HCT116 (cell line): ENCODE measurements at regions of chr17 and their contacts with region 1.

Region 1: DNA sequence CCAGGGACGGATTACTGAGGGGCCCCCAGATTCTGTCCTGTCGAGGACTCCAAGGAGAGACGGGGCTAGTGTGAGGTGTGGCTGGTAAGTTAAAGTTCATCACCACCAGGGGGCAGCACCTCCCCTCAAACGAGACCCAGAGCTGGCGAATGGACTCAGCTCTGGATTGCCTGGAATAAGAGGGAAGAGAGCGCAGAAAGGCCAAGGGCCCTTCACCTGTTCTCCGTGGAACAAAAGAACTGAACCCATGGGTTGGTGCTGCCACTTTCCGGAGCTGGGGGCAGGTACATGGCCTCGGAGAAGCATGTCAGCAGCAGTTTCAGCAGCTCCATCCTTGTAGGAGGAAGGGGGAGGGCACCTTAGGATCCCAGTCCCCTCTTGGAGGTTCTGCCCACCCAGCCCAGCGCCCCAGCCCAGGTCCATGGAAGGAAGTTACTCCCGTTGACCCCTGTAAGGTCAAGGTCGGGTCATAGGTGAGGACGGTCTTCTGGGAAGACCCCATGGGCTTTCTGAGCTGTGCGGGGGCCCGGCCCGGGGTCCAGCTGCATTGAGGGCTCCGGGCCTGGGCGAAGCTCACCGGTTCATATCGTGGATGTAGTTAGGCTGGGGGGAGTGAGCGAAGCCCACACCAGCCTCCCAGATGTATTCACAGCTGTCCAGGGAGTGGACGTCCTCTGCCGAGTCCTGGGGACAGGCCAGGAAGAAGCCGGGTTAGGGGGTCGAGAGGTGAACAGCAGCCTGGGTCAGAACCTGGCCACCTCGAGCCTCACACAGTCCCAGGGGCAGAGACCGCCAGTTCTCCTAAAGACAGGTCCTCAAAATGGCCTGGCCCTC is 10.7 kb downstream of the HID1 start:
- DNase-seq: peak; percentile 80
- ATAC-seq: peak; percentile 80
- H3K4me3 ChIP-seq: no peak overlapping the region
- H3K27ac ChIP-seq: no peak overlapping the region
- H3K4me1 ChIP-seq: peaks cover 11 to 20% of the 10 kb centered on the region in 2 experiments; a peak in 3 of 4 replicates
- H3K27me3 ChIP-seq: no peaks in the 10 kb centered on the region
- CTCF ChIP-seq: peak; percentile 75 to 95 (median 87)
- POLR2A ChIP-seq: no peak
- RAD21 ChIP-seq: peak; percentile 99

Region 2: GRCh38 chr17:74790161-74791054 is 171.5 kb before region 1 on chr17:
- CTCF ChIA-PET with region 1: interaction called, 12 read pairs
- POLR2A ChIA-PET with region 1: no interaction called
- RAD21 ChIA-PET with region 1: no interaction called
- intact Hi-C with region 1: loop called (anchors 1 kb)
- DNase-seq: no peak
- ATAC-seq: no peak
- H3K4me3 ChIP-seq: no peak overlapping the region
- H3K27ac ChIP-seq: no peak overlapping the region
- H3K4me1 ChIP-seq: no peaks in the 10 kb centered on the region; a peak in 1 of 4 replicates
- H3K27me3 ChIP-seq: no peaks in the 10 kb centered on the region
- CTCF ChIP-seq: no peak
- POLR2A ChIP-seq: no peak
- RAD21 ChIP-seq: no peak

Region 3: GRCh38 chr17:74950207-74950606 is 11.7 kb before region 1 on chr17:
- CTCF ChIA-PET with region 1: interaction called, 24 read pairs
- POLR2A ChIA-PET with region 1: interaction called, 4 read pairs
- RAD21 ChIA-PET with region 1: no interaction called
- intact Hi-C with region 1: no loop called
- DNase-seq: no peak
- ATAC-seq: peak; percentile 45
- H3K4me3 ChIP-seq: no peak overlapping the region
- H3K27ac ChIP-seq: no peak overlapping the region
- H3K4me1 ChIP-seq: peaks cover 2 to 19% of the 10 kb centered on the region in 2 experiments; a peak in 3 of 4 replicates
- H3K27me3 ChIP-seq: no peaks in the 10 kb centered on the region
- CTCF ChIP-seq: no peak
- POLR2A ChIP-seq: no peak
- RAD21 ChIP-seq: no peak

Region 4: DNA sequence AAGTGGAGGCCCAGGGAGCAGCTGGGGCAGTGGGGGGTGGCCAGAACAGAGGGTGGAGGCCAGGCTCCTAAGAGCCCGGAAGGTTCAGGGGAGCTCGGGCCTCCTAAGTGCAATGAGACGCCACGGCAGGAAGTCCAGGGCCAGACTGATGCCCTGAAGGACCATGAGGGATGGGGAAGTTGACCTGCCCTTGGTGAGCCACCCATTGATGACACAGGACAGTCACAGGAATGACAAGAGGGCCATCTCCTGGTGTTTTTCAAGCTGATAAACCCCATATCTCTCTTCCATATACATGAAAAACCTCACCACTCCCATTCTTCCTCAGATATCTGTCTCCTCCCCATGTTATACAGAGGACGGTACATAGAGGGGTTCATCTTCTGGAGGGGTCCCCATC is 44.8 kb after region 1 on chr17:
- CTCF ChIA-PET with region 1: interaction called, 35 read pairs
- POLR2A ChIA-PET with region 1: interaction called, 4 read pairs
- RAD21 ChIA-PET with region 1: interaction called, 3 read pairs
- intact Hi-C with region 1: loop called (anchors 1 kb)
- DNase-seq: no peak
- ATAC-seq: peak; percentile 52
- H3K4me3 ChIP-seq: no peak overlapping the region
- H3K27ac ChIP-seq: no peak overlapping the region
- H3K4me1 ChIP-seq: peaks cover under 1 to 5% of the 10 kb centered on the region in 2 experiments; a peak in 2 of 4 replicates
- H3K27me3 ChIP-seq: no peaks in the 10 kb centered on the region
- CTCF ChIP-seq: peak in 1 of 3 experiments; percentile 47; a peak in 1 of 6 replicates
- POLR2A ChIP-seq: no peak
- RAD21 ChIP-seq: peak; percentile 69

Region 5: GRCh38 chr17:75059369-75060345 is 97.8 kb after region 1 on chr17:
- CTCF ChIA-PET with region 1: interaction called, 16 read pairs
- POLR2A ChIA-PET with region 1: interaction called, 3 read pairs
- RAD21 ChIA-PET with region 1: interaction called, 3 read pairs
- intact Hi-C with region 1: no loop called
- DNase-seq: no peak
- ATAC-seq: peak; percentile 67; the same call in 1 of the 2 replicates
- H3K4me3 ChIP-seq: no peak overlapping the region
- H3K27ac ChIP-seq: no peak overlapping the region
- H3K4me1 ChIP-seq: peaks cover 0 to 4% of the 10 kb centered on the region in 2 experiments; a peak in 1 of 4 replicates
- H3K27me3 ChIP-seq: no peaks in the 10 kb centered on the region
- CTCF ChIP-seq: peak; percentile 39 to 54 (median 41); a peak in 5 of 6 replicates
- POLR2A ChIP-seq: no peak
- RAD21 ChIP-seq: peak; percentile 69

Region 6: DNA sequence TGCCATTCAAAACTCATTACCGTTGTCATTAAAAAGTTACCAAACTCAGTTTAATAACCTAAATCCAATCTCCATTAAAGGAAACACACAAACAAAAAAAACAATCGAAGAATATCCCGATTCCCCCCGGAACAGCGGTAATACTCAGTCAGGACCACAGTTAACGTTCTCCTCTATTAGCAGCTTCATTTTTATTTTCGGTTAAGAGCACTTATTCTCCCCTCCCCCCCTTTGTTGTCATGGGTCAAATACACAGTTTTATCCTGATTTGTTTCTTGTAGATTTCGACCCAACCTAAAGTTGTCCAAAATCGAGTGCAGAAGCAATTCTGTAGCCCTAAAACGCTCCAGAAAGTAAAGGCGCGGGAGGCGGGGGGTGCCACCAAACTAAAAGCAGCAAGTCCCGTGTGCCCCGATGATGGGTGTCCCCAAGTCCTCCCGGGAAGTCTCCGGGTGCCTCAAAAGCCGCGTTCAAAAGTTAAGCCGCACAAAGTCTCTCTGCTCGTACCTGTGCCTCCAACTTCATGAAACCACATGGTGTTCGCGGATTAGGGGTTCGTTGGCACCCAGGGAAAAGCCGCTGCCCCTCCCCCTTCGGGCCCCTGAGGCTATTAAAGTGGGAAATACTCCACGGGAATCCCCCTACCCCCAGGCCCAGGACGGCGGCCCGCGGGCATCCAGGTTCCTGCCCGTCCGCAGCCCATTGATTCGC is 219.9 kb after region 1 on chr17:
- CTCF ChIA-PET with region 1: no interaction called
- POLR2A ChIA-PET with region 1: no interaction called
- RAD21 ChIA-PET with region 1: no interaction called
- intact Hi-C with region 1: no loop called
- DNase-seq: no peak
- ATAC-seq: no peak
- H3K4me3 ChIP-seq: peak overlapping the region; percentile 76 to 89
- H3K27ac ChIP-seq: peak overlapping the region; percentile 100
- H3K4me1 ChIP-seq: peaks cover 20 to 33% of the 10 kb centered on the region in 2 experiments
- H3K27me3 ChIP-seq: no peaks in the 10 kb centered on the region
- CTCF ChIP-seq: no peak
- POLR2A ChIP-seq: no peak
- RAD21 ChIP-seq: no peak

Region 7: DNA sequence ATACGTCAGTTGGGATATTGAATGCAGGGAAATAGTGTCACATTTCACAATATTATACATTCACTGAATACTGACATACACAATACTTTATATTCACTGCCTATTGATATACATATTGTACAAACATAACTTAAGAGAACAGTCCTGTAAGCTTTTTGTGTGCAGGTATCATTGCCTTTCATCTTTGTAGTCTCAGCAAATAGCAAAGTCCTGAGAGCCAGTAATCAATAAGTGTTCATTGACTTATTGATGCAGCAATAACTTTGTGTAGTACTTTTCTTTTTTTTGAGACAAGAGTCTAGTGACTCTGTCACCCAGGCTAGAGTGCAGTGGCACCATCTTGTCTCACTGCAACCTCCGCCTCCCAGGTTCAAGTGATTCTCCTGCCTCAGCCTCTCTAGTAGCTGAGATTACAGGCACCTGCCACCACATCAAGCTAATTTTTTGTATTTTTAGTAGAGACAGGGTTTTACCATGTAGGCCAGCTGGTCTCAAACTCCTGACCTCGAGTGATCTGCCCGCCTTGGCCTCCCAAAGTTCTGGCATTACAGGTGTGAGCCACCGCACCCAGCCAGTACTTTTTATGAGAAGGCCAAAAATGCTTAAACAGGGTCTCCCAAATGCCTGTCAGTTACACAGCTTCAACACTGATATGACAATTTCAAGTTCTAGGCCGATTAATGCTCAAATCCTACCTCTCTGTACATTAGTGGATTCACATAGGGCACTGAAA is 238.2 kb after region 1 on chr17:
- CTCF ChIA-PET with region 1: interaction called, 18 read pairs
- POLR2A ChIA-PET with region 1: interaction called, 6 read pairs
- RAD21 ChIA-PET with region 1: interaction called, 4 to 7 read pairs
- intact Hi-C with region 1: loop called (anchors 1 kb)
- DNase-seq: no peak
- ATAC-seq: no peak
- H3K4me3 ChIP-seq: no peak overlapping the region
- H3K27ac ChIP-seq: peak overlapping the region; percentile 62
- H3K4me1 ChIP-seq: peaks cover 20 to 37% of the 10 kb centered on the region in 2 experiments
- H3K27me3 ChIP-seq: no peaks in the 10 kb centered on the region
- CTCF ChIP-seq: no peak
- POLR2A ChIP-seq: no peak
- RAD21 ChIP-seq: no peak

Region 8: DNA sequence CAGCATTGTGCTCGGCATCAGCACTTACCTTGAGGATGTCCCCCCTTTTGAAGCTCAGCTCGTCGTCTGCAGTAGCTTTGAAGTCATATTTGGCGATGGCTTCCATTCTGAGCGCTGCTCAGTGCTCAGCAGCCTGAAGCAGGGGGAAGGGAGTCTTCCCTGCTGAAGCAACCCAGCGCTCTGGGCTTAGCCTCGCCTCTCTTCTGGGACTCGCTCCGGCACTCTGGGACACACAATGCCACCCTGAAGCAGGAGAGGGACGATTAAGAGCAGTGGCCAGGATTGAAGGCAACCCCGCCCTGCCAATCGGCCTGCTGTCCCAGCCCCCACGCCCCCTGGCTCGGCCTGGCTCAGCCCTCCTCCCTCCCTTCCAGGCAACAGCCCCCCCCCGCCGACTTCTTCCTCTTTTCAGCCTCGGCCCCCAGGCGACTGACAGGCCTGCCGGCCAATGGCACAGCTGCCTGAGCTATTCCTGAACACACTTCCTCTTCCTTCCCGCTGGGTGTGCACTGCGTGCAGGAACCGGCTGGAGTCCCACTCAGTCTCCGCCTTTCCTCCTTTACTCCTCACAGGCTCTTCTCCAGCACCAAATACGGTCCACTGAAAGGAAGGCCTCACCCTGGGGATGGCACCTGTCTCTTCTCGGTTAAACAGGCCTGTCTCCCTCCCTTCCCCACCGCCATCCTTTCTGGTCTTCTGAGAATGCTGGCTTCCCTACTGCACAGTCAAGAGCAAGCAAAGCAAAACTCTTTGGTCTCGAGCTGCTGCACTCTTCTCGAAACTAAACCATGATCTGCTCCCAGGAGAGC is 431.9 kb after region 1 on chr17:
- CTCF ChIA-PET with region 1: no interaction called
- POLR2A ChIA-PET with region 1: no interaction called
- RAD21 ChIA-PET with region 1: no interaction called
- intact Hi-C with region 1: no loop called
- DNase-seq: peak; percentile 95
- ATAC-seq: peak; percentile 99
- H3K4me3 ChIP-seq: peak overlapping the region; percentile 50 to 75
- H3K27ac ChIP-seq: peak overlapping the region; percentile 60
- H3K4me1 ChIP-seq: peaks cover 23 to 30% of the 10 kb centered on the region in 2 experiments
- H3K27me3 ChIP-seq: no peaks in the 10 kb centered on the region
- CTCF ChIP-seq: no peak; a peak in 1 of 6 replicates
- POLR2A ChIP-seq: peak; percentile 52
- RAD21 ChIP-seq: no peak

Region 9: GRCh38 chr17:75440738-75441448 is 479.0 kb after region 1 on chr17:
- CTCF ChIA-PET with region 1: no interaction called
- POLR2A ChIA-PET with region 1: no interaction called
- RAD21 ChIA-PET with region 1: no interaction called
- intact Hi-C with region 1: no loop called
- DNase-seq: no peak
- ATAC-seq: no peak
- H3K4me3 ChIP-seq: no peak overlapping the region
- H3K27ac ChIP-seq: no peak overlapping the region
- H3K4me1 ChIP-seq: peaks cover 4 to 20% of the 10 kb centered on the region in 2 experiments; a peak in 3 of 4 replicates
- H3K27me3 ChIP-seq: no peaks in the 10 kb centered on the region
- CTCF ChIP-seq: no peak
- POLR2A ChIP-seq: no peak
- RAD21 ChIP-seq: no peak